Right ventricle myocardium inferior (tissue), 1 donor: ENCODE measurements at regions of chr13 and their contacts with region 1.

Region 1: GRCh38 chr13:20525690-20526544 is at the start of gene CRYL1:
- DNase-seq: peak; percentile 92
- ATAC-seq: peak; percentile 97
- total RNA-seq, gene CRYL1: 19.8 TPM

Region 2: GRCh38 chr13:20475927-20476691 is 49.8 kb before region 1 on chr13:
- intact Hi-C with region 1: no loop called
- DNase-seq: no peak
- ATAC-seq: no peak

Region 3: GRCh38 chr13:20566898-20567874 is 41.3 kb after region 1 on chr13 and contains the start of gene IFT88:
- intact Hi-C with region 1: loop called (anchors 2 kb)
- DNase-seq: peak; percentile 96
- ATAC-seq: peak; percentile 99
- total RNA-seq, gene IFT88: 5.8 TPM